Astrocyte of the cerebellum (primary cell): ENCODE measurements at regions of chr1 and their contacts with region 1.

Region 1: GRCh38 chr1:184982002-184982954 is 8.0 kb upstream of the NIBAN1 start:
- DNase-seq: no peak
- H3K4me3 ChIP-seq: no peak overlapping the region
- CTCF ChIP-seq: peak; percentile 90

Region 2: GRCh38 chr1:184563308-184563707 is 419.0 kb before region 1 on chr1:
- in situ Hi-C with region 1: no loop called
- DNase-seq: peak; percentile 6
- H3K4me3 ChIP-seq: no peak overlapping the region
- CTCF ChIP-seq: peak; percentile 33

Region 3: GRCh38 chr1:184805667-184806295 is 176.5 kb before region 1 on chr1:
- in situ Hi-C with region 1: loop called (anchors 25 kb)
- DNase-seq: peak; percentile 85
- H3K4me3 ChIP-seq: no peak overlapping the region
- CTCF ChIP-seq: peak; percentile 84